ENCODE measurements at regions of chr2 and their contacts with region 1.

Region 1: GRCh38 chr2:27071277-27071989 is at the start of gene OST4:
- DNase-seq: peak; percentile 91
- ATAC-seq: peak; percentile 92
- H3K4me3 Mint-ChIP-seq: peak within 1 kb of the TSS; percentile 98
- H3K27ac Mint-ChIP-seq: peak within 1 kb of the TSS; percentile 95
- H3K4me1 Mint-ChIP-seq: peaks cover 68% of the 10 kb centered on the region
- H3K27me3 Mint-ChIP-seq: no peaks in the 10 kb centered on the region
- CTCF ChIP-seq: no peak
- total RNA-seq, gene OST4: 257 to 262 TPM

Region 2: GRCh38 chr2:27059141-27059820 is 12.2 kb before region 1 on chr2:
- CTCF ChIA-PET with region 1: interaction called, 5 read pairs
- POLR2A ChIA-PET with region 1: interaction called, 27 read pairs
- intact Hi-C with region 1: no loop called
- DNase-seq: no peak
- ATAC-seq: no peak
- H3K4me3 Mint-ChIP-seq: no peak overlapping the region
- H3K27ac Mint-ChIP-seq: no peak overlapping the region
- H3K4me1 Mint-ChIP-seq: no peaks in the 10 kb centered on the region
- H3K27me3 Mint-ChIP-seq: no peaks in the 10 kb centered on the region
- CTCF ChIP-seq: no peak